ENCODE measurements at regions of chr4 and their contacts with region 1.

Region 1: GRCh38 chr4:109977854-109978501 is 65.3 kb downstream of the EGF start:
- DNase-seq: no peak
- H3K4me3 ChIP-seq: no peak overlapping the region
- H3K27ac ChIP-seq: no peak overlapping the region
- H3K4me1 ChIP-seq: no peaks in the 10 kb centered on the region
- H3K27me3 ChIP-seq: no peaks in the 10 kb centered on the region
- CTCF ChIP-seq: peak; percentile 74

Region 2: GRCh38 chr4:109424093-109424841 is 553.7 kb before region 1 on chr4:
- intact Hi-C with region 1: loop called (anchors 5 kb)
- DNase-seq: no peak
- H3K4me3 ChIP-seq: no peak overlapping the region
- H3K27ac ChIP-seq: no peak overlapping the region
- H3K4me1 ChIP-seq: peaks cover 5% of the 10 kb centered on the region
- H3K27me3 ChIP-seq: no peaks in the 10 kb centered on the region
- CTCF ChIP-seq: no peak